ENCODE measurements at regions of chr22 and their contacts with region 1.

Region 1: GRCh38 chr22:38872172-38872830 is at the start of gene CBX6:
- DNase-seq: peak; percentile 96 to 97
- ATAC-seq: peak; percentile 72 to 91 (median 84)
- H3K4me3 ChIP-seq: peak within 1 kb of the TSS; percentile 58
- H3K4me3 Mint-ChIP-seq: peak within 1 kb of the TSS; percentile 87
- H3K27ac ChIP-seq: peak within 1 kb of the TSS; percentile 64
- H3K27ac Mint-ChIP-seq: peak within 1 kb of the TSS; percentile 76 to 91
- H3K4me1 ChIP-seq: peaks cover 50% of the 10 kb centered on the region
- H3K4me1 Mint-ChIP-seq: peaks cover 26 to 45% of the 10 kb centered on the region in 2 donors
- H3K27me3 ChIP-seq: no peaks in the 10 kb centered on the region
- H3K27me3 Mint-ChIP-seq: peaks cover 0 to 11% of the 10 kb centered on the region in 2 donors
- CTCF ChIP-seq: no peak
- total RNA-seq, gene CBX6: 68.0 to 81.5 (median 75.7) TPM

Region 2: DNA sequence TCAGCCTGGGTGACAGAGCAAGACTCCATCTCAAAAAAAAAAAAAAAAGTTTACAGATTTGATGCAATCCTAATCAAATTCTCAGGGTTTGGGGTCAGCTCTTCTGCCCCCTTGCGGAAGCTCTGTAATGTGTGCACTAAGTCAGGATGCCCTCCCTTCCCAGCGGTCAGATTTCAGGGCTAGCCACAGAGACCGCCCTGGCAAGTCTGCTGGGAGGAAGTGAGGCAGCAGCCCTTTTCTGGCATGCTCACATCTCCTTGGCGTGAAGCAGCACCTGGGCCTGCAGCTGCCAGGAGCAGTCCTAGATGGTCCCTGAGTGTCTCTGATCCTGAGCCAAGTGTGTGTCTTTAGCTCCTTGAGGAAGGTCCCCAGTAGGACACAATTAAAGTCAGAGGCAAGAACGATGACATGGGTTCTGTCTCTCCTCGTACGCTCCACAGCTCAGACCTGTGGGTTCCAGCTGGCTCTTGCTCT is 130.9 kb after region 1 on chr22:
- intact Hi-C with region 1: loop called (anchors 2 kb)
- DNase-seq: peak; percentile 70 to 90
- ATAC-seq: peak; percentile 87 to 95 (median 95)
- H3K4me3 ChIP-seq: no peak overlapping the region
- H3K4me3 Mint-ChIP-seq: peak overlapping the region; percentile 32
- H3K27ac ChIP-seq: peak overlapping the region; percentile 11
- H3K27ac Mint-ChIP-seq: peak overlapping the region in 1 of 2 donors; percentile 59
- H3K4me1 ChIP-seq: peaks cover 14% of the 10 kb centered on the region
- H3K4me1 Mint-ChIP-seq: peaks cover 9 to 16% of the 10 kb centered on the region in 2 donors
- H3K27me3 ChIP-seq: no peaks in the 10 kb centered on the region
- H3K27me3 Mint-ChIP-seq: peaks cover 5% of the 10 kb centered on the region in 2 donors
- CTCF ChIP-seq: peak; percentile 79

Region 3: DNA sequence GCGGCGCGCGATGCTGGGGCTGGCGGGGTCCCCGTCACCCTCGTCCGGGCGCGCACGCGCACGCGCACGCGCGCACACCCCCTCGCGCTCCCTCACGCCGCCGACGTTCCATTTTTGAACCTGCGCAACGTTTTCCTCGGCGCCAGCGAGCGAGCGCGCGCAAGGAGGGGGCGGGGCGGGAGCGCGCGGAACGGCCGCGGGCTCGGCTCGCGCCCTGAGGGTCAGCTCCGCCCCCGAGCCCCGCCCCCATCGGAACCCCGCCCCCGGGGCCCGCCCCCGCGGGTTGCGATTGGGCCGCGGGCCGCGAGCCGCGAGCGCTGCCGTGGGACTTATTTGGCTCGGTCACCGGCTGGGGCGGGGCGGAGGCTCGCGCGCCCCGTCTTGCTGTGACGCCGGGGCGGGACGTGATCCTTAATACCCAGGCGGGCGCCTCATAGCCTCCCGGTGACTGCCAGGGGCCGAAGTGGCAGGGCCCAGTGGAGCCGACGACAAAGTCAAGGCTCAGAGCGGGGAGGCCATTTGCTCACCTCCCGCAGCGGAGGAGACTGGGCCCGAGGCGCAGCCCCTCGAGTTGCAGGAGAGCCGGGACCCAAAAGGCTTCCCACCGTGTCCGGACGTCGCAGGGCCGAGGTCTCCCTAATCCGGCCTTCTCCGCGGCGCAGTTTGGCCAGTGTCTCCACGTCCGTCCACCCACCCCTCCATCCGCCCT is 280.4 kb after region 1 on chr22 and contains the start of gene CBX7:
- intact Hi-C with region 1: loop called (anchors 5 kb)
- DNase-seq: peak; percentile 89 to 97
- ATAC-seq: peak; percentile 88 to 95 (median 88)
- H3K4me3 ChIP-seq: peak within 1 kb of the TSS; percentile 82
- H3K4me3 Mint-ChIP-seq: peak within 1 kb of the TSS; percentile 87
- H3K27ac ChIP-seq: peak within 1 kb of the TSS; percentile 96
- H3K27ac Mint-ChIP-seq: peak within 1 kb of the TSS; percentile 84 to 98
- H3K4me1 ChIP-seq: peaks cover 52% of the 10 kb centered on the region
- H3K4me1 Mint-ChIP-seq: peaks cover 15 to 32% of the 10 kb centered on the region in 2 donors
- H3K27me3 ChIP-seq: peaks cover 3% of the 10 kb centered on the region
- H3K27me3 Mint-ChIP-seq: no peaks in the 10 kb centered on the region
- CTCF ChIP-seq: no peak
- total RNA-seq, gene CBX7: 49.6 to 52.9 (median 50.0) TPM

Region 4: DNA sequence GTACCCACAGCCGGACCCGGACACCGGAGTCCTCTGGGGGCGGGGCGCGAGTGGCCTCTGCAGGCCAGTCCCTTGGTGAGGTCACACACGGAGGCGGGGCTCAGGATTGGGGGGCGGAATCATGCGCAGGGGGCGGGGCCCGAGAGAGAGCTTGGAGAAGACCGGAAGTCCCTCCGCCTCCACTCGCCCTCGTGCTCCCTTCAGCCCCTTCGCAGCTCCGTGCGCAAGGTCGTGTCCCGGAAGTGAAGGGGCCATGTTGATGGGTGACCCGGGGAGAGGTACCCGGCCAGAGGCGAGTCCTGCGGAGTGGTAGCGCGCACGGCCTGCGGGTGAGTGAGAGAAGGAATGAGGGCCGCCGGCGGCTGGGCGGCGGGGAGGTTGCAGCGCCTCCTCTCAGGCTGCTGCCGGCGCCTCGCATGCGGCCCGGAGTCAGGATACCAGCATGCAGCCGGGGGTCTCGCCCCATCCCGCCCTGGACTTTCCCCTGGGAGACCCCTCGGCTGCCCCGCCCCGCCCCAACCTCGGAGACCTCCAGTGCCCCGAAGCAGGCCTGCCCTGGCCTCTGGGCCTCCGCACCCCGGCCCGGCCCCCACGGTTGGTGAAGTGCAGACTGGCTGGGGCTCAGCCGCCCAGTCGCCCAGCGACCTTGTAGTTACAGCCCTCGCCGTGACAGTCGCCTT is 629.9 kb after region 1 on chr22 and contains the start of gene MIEF1:
- intact Hi-C with region 1: no loop called
- DNase-seq: peak; percentile 89 to 95
- ATAC-seq: peak; percentile 97 to 99 (median 97)
- H3K4me3 ChIP-seq: peak within 1 kb of the TSS; percentile 76
- H3K4me3 Mint-ChIP-seq: peak within 1 kb of the TSS; percentile 91
- H3K27ac ChIP-seq: peak within 1 kb of the TSS; percentile 80
- H3K27ac Mint-ChIP-seq: peak within 1 kb of the TSS; percentile 90 to 94
- H3K4me1 ChIP-seq: peaks cover 26% of the 10 kb centered on the region
- H3K4me1 Mint-ChIP-seq: peaks cover 27 to 50% of the 10 kb centered on the region in 2 donors
- H3K27me3 ChIP-seq: no peaks in the 10 kb centered on the region
- H3K27me3 Mint-ChIP-seq: no peaks in the 10 kb centered on the region
- CTCF ChIP-seq: no peak
- total RNA-seq, gene MIEF1: 16.1 to 27.6 (median 25.1) TPM

Measured in natural killer cell (primary cell).